K562 (cell line): ENCODE measurements at regions of chr5 and their contacts with region 1.

Region 1: DNA sequence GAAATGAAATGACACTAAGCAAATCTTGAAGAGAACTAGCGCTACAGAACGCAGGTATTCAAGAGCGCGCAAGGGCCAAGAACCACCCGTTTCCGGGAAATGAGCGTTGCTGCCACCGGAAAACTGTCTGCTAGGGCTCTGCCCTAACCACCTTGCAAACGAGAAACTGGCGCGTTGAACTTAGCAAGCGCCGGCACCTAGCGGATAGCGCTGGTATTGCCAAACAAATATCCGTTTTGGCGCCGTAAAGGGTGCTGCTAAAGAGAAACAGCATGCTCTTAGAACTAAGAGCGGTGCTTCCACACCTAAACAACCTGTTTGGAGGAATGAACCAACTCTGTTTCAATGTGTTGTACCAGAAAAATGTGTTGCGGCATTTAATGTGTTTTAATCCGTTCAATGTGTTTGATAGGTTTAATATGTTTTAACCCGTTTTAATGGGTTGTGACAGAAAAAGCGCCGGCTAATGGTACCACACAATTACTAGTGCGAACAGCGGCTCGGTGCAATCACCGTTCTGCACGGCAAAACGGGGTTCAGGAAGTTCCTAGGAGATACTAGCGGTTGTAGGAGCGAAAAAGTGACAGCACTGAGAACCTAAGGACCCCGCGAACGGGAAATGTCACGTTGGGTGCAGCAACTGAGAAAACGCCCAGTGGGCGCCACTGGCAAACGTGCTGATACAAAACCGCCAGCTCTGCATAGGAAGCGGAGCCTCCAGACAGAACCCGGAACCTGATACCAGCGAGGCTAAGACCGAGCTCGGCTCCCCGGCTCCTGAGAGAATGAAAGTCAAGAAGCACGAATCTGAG is at the start of gene ANXA2R:
- DNase-seq: peak; percentile 44 to 99 (median 58)
- ATAC-seq: peak; percentile 61
- H3K4me3 ChIP-seq: peak within 1 kb of the TSS; percentile 49
- H3K27ac ChIP-seq: peak within 1 kb of the TSS; percentile 94
- H3K4me1 ChIP-seq: peaks cover 6 to 39% of the 10 kb centered on the region in 2 experiments; a peak in 4 of 5 replicates
- H3K27me3 ChIP-seq: no peaks in the 10 kb centered on the region
- CTCF ChIP-seq: peak; percentile 93 to 98 (median 96)
- EP300 ChIP-seq: peak; percentile 74
- POLR2A ChIP-seq: peak; percentile 43
- RAD21 ChIP-seq: peak; percentile 75 to 89
- polyA plus RNA-seq, gene ANXA2R: 2.1 to 3.5 TPM

Region 2: GRCh38 chr5:42756606-42757601 is 283.6 kb before region 1 on chr5 and contains the start of gene CCDC152:
- CTCF ChIA-PET with region 1: no interaction called
- POLR2A ChIA-PET with region 1: no interaction called
- in situ Hi-C with region 1: no loop called
- intact Hi-C with region 1: loop called (anchors 10 kb)
- DNase-seq: peak; percentile 11 to 67 (median 28)
- ATAC-seq: peak; percentile 96
- H3K4me3 ChIP-seq: peak within 1 kb of the TSS; percentile 48
- H3K27ac ChIP-seq: no peak within 1 kb of the TSS; the same call in 2 of the 3 replicates
- H3K4me1 ChIP-seq: peaks cover 4 to 5% of the 10 kb centered on the region in 2 experiments; a peak in 2 of 5 replicates
- H3K27me3 ChIP-seq: no peaks in the 10 kb centered on the region
- CTCF ChIP-seq: no peak
- EP300 ChIP-seq: no peak
- POLR2A ChIP-seq: peak; percentile 45; the same call in 1 of the 2 replicates
- RAD21 ChIP-seq: no peak
- polyA plus RNA-seq, gene CCDC152: 11.0 to 11.6 TPM

Region 3: DNA sequence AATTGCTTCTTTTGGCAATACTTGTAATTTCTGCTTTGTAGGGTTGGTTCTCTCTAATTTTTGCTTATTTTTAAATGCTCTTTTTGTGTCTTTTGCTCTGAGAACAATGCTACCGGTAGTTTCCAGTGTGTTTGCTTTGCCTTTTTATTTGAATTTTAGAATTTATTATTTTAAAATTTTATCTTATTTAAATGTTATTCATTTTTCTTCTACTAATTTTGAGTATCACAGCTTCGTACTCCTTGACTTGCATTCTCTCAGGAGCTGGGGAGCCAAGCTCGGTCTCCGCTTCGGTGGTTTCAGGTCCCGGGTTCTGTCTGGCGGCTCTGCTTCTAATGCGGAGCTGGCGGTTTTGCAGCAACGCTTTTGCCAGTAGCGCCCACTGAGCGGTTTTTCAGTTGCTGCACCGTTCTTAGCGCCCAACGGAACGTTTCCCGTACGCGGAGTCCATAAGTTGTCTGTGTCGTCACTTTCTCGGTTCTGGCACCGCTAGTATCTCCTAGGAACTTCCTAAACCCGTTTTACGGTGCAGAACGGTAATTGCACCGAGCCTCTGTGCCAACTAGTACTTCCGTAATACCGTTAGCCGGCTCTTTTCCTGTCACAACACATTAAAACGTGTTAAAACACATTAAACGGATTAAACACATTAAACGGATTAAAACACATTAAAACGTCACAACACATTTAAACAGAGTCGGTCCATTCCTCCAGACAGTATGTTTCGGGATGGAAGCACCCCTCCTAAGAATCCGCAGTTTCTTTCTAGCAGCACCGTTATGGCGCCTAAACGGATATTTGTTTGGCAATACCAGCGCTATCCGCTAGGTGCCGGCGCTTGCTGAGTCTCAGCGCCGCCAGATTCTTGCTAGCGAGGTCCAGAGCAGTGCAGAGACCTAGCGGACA is 46.0 kb before region 1 on chr5:
- CTCF ChIA-PET with region 1: interaction called, 6 read pairs
- POLR2A ChIA-PET with region 1: interaction called, 8 read pairs
- in situ Hi-C with region 1: no loop called
- intact Hi-C with region 1: loop called (anchors 1 kb)
- DNase-seq: peak; percentile 59 to 96 (median 65)
- ATAC-seq: peak; percentile 80
- H3K4me3 ChIP-seq: peak overlapping the region; percentile 43
- H3K27ac ChIP-seq: peak overlapping the region; percentile 80
- H3K4me1 ChIP-seq: peaks cover 6 to 26% of the 10 kb centered on the region in 2 experiments; a peak in 4 of 5 replicates
- H3K27me3 ChIP-seq: no peaks in the 10 kb centered on the region
- CTCF ChIP-seq: peak; percentile 94 to 97 (median 95)
- EP300 ChIP-seq: peak; percentile 32; the same call in 1 of the 2 replicates
- POLR2A ChIP-seq: peak; percentile 70
- RAD21 ChIP-seq: peak; percentile 68 to 80

Region 4: DNA sequence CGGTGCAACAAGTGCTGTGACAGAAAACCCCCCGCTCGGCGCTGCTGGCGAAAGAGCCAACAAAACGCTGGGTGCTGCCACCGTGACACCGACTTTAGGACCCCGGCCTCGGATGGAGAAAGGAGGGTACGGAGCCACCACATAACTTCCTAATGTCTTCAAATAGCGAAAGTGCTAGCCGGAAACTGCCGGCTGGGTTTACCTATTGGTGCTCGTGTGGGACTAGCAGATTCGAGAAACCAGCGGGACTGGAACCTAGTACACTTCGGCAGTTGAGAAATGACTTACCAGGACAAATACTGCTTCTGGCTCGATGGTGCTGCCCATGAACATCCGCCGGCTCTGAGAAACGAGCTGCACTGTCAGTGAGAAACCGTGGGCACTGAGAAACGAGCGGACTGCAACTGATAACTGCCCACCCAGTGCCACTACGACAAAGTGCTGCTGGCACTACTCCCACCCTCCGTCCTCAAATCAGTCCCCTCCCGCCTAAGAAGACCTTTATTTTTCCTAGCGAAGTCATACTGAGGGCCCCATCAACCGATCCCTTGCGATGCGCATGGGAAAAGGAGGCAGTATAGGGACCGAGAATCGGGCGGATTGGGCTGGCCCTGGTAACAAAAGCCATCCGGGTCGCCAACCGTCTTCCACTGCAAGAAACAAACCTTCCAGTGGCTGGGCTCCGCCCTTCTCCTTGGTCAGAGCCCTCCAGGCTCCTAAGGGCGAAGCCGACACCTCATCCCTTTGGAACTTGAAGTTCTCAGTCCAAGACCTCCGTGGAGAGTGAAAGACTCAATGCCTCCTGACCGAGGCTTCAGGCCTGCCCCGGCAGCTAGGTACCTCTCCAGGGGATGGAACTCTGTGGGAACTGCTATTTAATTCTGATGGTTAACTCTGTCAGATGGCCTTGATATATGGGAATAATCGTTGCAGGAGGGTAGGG is 26.6 kb after region 1 on chr5:
- CTCF ChIA-PET with region 1: interaction called, 18 read pairs
- POLR2A ChIA-PET with region 1: interaction called, 38 read pairs
- in situ Hi-C with region 1: no loop called
- intact Hi-C with region 1: loop called (anchors 1 kb)
- DNase-seq: peak; percentile 45 to 95 (median 58)
- ATAC-seq: peak; percentile 60
- H3K4me3 ChIP-seq: peak overlapping the region; percentile 80
- H3K27ac ChIP-seq: peak overlapping the region; percentile 97
- H3K4me1 ChIP-seq: peaks cover 14 to 25% of the 10 kb centered on the region in 2 experiments
- H3K27me3 ChIP-seq: no peaks in the 10 kb centered on the region; a peak in 1 of 5 replicates
- CTCF ChIP-seq: 0 out of 6 replicates have a peak, but pooled peaks of 1 of the 3 experiments have one; percentile 2
- EP300 ChIP-seq: peak; percentile 100
- POLR2A ChIP-seq: peak; percentile 78
- RAD21 ChIP-seq: no peak